ENCODE measurements at regions of chr21 and their contacts with region 1.

Region 1: DNA sequence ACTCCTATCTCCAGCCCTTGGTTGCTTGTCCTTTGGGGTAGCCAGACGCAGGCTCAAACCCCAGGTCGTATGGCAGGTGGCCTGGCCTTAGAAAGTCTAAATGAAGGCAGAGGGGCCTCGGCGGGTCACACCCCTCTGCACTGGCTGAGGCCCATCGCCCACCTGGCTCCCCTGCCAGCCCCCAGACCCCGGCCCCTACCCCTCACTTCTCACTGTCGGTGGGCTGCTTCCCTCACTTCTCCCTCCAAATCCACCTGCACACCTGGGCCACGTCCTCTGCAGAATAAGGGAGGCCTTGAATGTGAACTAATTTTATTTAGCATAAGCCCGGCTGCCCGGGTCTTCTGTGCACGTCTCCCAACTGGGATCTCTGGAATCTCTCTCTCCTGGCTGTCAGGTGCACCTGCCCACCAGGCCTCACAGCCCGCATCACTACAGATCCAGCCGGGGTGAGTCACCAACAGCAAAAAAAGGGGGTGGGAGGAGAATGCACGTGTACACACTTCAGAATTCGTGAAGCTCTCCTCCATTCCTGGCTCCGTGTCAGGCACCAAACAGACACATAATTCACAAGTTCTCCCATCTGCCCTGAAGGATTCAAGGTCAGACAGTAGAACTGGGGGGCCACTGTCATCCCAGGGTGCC is 107.5 kb upstream of the SIM2 start:
- DNase-seq: no peak
- H3K4me3 ChIP-seq: no peak overlapping the region
- H3K27ac ChIP-seq: no peak overlapping the region
- H3K4me1 ChIP-seq: peaks cover 9% of the 10 kb centered on the region
- H3K27me3 ChIP-seq: no peaks in the 10 kb centered on the region
- CTCF ChIP-seq: no peak
- POLR2A ChIP-seq: no peak

Region 2: GRCh38 chr21:34812504-34813265 is 1778.8 kb before region 1 on chr21:
- intact Hi-C with region 1: loop called (anchors 5 kb)
- DNase-seq: peak in 1 of 2 donors; percentile 64
- H3K4me3 ChIP-seq: no peak overlapping the region
- H3K27ac ChIP-seq: peak overlapping the region; percentile 65
- H3K4me1 ChIP-seq: peaks cover 83% of the 10 kb centered on the region
- H3K27me3 ChIP-seq: no peaks in the 10 kb centered on the region
- CTCF ChIP-seq: no peak
- POLR2A ChIP-seq: no peak

Region 3: DNA sequence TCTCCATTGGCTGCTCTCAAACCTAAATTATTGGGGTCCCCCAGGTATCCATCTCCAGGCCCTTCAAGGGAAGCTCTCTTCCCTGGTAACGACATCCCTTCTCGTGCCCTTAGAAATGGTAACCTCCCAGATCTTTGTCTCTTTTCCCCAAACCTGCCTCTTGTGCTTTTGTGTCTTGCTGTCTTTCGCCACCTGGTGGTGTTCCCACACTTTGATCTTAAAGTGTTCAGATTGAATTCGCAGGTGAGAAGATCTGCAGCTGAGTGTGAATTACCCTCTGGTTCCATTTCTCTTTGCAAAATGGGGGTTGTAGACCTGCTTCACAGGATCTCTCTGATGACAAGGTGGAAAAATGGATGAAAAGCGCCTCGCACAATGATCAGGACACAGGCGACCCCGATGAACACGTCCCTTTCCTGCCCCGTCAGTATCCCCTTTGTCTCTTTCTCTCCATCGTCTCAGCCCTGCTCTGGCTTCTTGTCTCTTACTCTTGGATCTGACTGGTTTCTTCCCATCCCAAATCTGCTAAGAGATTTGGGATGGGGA is 381.7 kb before region 1 on chr21:
- intact Hi-C with region 1: no loop called
- DNase-seq: no peak
- H3K4me3 ChIP-seq: no peak overlapping the region
- H3K27ac ChIP-seq: no peak overlapping the region
- H3K4me1 ChIP-seq: no peaks in the 10 kb centered on the region
- H3K27me3 ChIP-seq: no peaks in the 10 kb centered on the region
- CTCF ChIP-seq: peak in 2 of 3 experiments; percentile 27 to 35
- POLR2A ChIP-seq: no peak

Measured in vagina (tissue), 2 donors.